Endothelial cell of umbilical vein (primary cell): ENCODE measurements at regions of chr15 and their contacts with region 1.

Region 1: GRCh38 chr15:95926875-95927274 is 403.6 kb upstream of the NR2F2 start:
- DNase-seq: no peak
- H3K4me3 ChIP-seq: no peak overlapping the region
- H3K27ac ChIP-seq: no peak overlapping the region
- H3K4me1 ChIP-seq: no peaks in the 10 kb centered on the region
- H3K27me3 ChIP-seq: no peaks in the 10 kb centered on the region
- CTCF ChIP-seq: no peak
- POLR2A ChIP-seq: no peak

Region 2: GRCh38 chr15:95884276-95884675 is 42.6 kb before region 1 on chr15:
- CTCF ChIA-PET with region 1: no interaction called
- POLR2A ChIA-PET with region 1: no interaction called
- dilution Hi-C with region 1: no loop called
- intact Hi-C with region 1: loop called (anchors 1 kb)
- DNase-seq: no peak
- H3K4me3 ChIP-seq: no peak overlapping the region
- H3K27ac ChIP-seq: no peak overlapping the region
- H3K4me1 ChIP-seq: peaks cover 22% of the 10 kb centered on the region
- H3K27me3 ChIP-seq: no peaks in the 10 kb centered on the region
- CTCF ChIP-seq: no peak
- POLR2A ChIP-seq: no peak

Region 3: DNA sequence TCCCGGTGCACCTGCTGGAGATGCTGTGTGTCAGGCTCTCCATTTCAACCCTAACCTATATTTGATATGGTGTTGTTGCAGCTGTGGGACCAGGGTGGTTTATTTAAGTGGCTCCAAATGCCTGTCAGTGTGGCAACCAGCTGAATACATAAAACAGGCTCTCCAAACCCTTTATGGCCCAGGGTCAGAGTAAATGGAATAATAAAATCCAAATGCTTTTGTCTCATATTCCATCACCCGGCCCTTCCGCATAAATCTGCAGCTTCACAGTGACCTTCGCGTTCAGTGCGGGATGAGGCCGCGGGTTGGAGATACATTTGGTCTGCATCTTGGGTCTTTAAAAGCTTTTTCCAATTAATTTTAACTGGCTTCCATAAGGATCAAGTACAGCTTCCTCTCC is 21.5 kb after region 1 on chr15:
- CTCF ChIA-PET with region 1: no interaction called
- POLR2A ChIA-PET with region 1: no interaction called
- dilution Hi-C with region 1: no loop called
- intact Hi-C with region 1: no loop called
- DNase-seq: no peak
- H3K4me3 ChIP-seq: no peak overlapping the region
- H3K27ac ChIP-seq: no peak overlapping the region
- H3K4me1 ChIP-seq: no peaks in the 10 kb centered on the region
- H3K27me3 ChIP-seq: no peaks in the 10 kb centered on the region
- CTCF ChIP-seq: no peak
- POLR2A ChIP-seq: no peak

Region 4: DNA sequence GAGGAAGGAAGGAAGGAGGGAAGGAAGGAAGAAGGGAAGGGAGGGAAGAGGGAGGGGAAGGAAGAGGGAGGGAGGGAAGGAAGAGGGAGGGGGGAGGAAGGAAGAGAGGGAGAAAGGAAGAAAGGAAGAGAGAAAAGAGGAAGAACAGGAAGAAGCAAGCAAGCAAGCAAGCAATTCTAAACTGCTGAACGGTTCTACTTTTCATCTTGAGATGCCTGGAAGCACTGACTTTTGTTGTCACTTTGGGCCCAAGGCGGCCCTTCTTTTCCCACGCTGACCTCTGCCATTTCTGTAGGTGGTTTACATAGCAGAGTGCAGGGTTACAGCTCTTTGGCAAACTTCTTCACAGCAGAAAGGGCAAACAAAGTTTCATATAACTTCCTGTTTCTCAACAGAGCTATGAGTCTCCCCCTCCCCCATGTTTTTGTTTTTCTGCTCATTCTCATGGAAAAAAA is 61.5 kb after region 1 on chr15:
- CTCF ChIA-PET with region 1: no interaction called
- POLR2A ChIA-PET with region 1: no interaction called
- dilution Hi-C with region 1: no loop called
- intact Hi-C with region 1: no loop called
- DNase-seq: peak; percentile 65
- H3K4me3 ChIP-seq: no peak overlapping the region
- H3K27ac ChIP-seq: no peak overlapping the region
- H3K4me1 ChIP-seq: no peaks in the 10 kb centered on the region
- H3K27me3 ChIP-seq: no peaks in the 10 kb centered on the region
- CTCF ChIP-seq: no peak
- POLR2A ChIP-seq: no peak